ENCODE measurements at regions of chr5 and their contacts with region 1.

Region 1: GRCh38 chr5:167696558-167697314 is 594.7 kb upstream of the WWC1 start:
- DNase-seq: no peak
- H3K4me3 ChIP-seq: no peak overlapping the region
- H3K27ac ChIP-seq: no peak overlapping the region
- H3K4me1 ChIP-seq: peaks cover 4 to 18% (median 7%) of the 10 kb centered on the region in 4 experiments; a peak in 6 of 7 replicates
- H3K27me3 ChIP-seq: no peaks in the 10 kb centered on the region
- CTCF ChIP-seq: peak in 1 of 3 experiments; percentile 21; a peak in 2 of 4 replicates
- EP300 ChIP-seq: no peak
- POLR2A ChIP-seq: no peak
- RAD21 ChIP-seq: peak; percentile 56 to 62

Region 2: DNA sequence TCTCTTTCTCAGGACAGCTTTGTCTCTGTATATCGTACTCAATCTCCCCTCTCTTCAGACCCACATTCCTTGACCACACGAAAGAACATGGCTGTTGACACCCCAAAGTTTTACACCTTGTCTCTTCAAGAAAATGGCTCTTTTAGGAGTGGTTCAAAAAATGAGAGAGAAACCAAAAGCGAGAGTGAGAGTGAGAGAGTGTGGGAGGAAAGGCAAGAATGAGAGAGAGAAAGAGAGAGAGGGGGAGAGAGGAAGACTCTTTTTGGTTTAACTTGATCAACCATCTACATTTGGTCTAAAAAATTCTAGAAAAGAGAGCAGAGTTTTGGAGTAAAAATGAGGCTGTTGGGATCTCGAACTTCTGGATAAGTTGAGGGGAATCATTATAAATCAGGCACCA is 12.9 kb after region 1 on chr5:
- CTCF ChIA-PET with region 1: interaction called, 13 read pairs
- POLR2A ChIA-PET with region 1: no interaction called
- DNase-seq: no peak
- H3K4me3 ChIP-seq: no peak overlapping the region
- H3K27ac ChIP-seq: no peak overlapping the region
- H3K4me1 ChIP-seq: no peaks in the 10 kb centered on the region
- H3K27me3 ChIP-seq: no peaks in the 10 kb centered on the region
- CTCF ChIP-seq: no peak
- EP300 ChIP-seq: no peak
- POLR2A ChIP-seq: no peak
- RAD21 ChIP-seq: no peak